ENCODE measurements at regions of chr15 and their contacts with region 1.

Region 1: DNA sequence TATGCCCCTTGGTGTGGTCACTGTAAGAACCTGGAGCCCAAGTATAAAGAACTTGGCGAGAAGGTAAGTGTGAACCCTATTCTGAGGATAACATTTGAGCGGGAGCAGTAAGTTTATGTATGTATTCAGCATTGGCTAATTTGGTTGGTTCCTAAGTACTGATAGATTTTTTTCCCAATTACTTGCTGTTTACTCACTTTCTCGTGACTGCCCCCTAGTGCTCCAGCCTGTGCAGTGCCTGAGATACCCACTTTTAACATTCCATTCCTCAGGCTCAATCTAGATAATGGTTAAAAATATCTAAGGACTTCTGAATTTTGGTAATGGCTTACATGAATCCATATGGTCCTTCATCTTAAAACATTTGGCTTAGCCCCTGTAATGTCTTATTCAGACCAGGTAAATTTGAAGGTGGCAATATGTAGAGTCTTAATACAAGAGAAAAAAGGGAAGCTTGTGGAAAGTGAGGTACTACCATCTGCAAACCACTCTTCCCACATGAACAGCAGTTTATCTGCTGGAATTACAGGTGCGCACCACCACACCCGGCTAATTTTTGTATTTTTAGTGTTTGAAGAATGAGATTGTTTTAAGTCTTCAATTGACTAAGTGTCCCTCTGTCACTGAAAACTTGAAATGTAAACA is 7.1 kb downstream of the ELL3 start:
- DNase-seq: peak; percentile 53
- CTCF ChIP-seq: peak; percentile 87

Region 2: GRCh38 chr15:43749690-43750345 is 19.9 kb before region 1 on chr15:
- CTCF ChIA-PET with region 1: interaction called, 22 read pairs
- POLR2A ChIA-PET with region 1: interaction called, 5 read pairs
- DNase-seq: peak; percentile 68
- CTCF ChIP-seq: no peak

Region 3: GRCh38 chr15:43791993-43792760 is 22.5 kb after region 1 on chr15 and contains the start of gene SERF2:
- CTCF ChIA-PET with region 1: interaction called, 16 read pairs
- POLR2A ChIA-PET with region 1: interaction called, 7 read pairs
- DNase-seq: peak; percentile 98
- CTCF ChIP-seq: no peak

Region 4: GRCh38 chr15:43886558-43886957 is 116.9 kb after region 1 on chr15:
- CTCF ChIA-PET with region 1: no interaction called
- POLR2A ChIA-PET with region 1: no interaction called
- DNase-seq: no peak
- CTCF ChIP-seq: no peak

Region 5: GRCh38 chr15:43939070-43939469 is 169.4 kb after region 1 on chr15:
- CTCF ChIA-PET with region 1: no interaction called
- POLR2A ChIA-PET with region 1: no interaction called
- DNase-seq: peak; percentile 33
- CTCF ChIP-seq: peak; percentile 15

Measured in GM10248 (cell line).